K562 (cell line): ENCODE measurements at regions of chr5 and their contacts with region 1.

Region 1: DNA sequence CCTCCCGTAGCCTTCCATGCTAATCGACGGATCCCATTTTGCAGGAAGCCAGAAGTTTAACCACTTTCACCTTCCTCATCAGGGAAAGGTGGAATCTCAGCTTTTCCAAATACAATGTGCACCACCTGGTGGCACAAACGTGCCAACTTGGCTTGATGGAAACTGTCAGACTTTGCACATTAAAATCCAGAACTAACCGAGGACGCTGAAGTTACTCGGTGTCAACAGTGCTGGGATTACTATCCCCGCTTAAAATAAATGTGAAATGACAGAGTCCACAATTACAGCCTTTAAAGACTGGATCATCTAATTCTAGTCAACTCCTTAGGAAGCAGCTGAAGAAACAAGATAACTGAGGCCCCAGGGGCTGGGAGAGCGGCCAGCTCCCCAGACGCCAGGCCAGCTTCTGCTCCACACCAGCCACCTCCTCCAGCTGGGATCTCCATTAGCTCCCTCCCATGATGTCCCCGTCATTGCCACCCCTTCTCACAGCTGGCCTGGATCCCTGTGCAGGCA is 50.1 kb upstream of the RETREG1 start:
- DNase-seq: no peak
- ATAC-seq: no peak; the same call in 2 of the 3 replicates
- H3K4me3 ChIP-seq: no peak overlapping the region
- H3K27ac ChIP-seq: no peak overlapping the region
- H3K4me1 ChIP-seq: no peaks in the 10 kb centered on the region
- H3K27me3 ChIP-seq: peaks cover 6 to 32% of the 10 kb centered on the region in 2 experiments; a peak in 4 of 5 replicates
- CTCF ChIP-seq: peak in 1 of 3 experiments; percentile 34; a peak in 1 of 6 replicates
- EP300 ChIP-seq: no peak
- POLR2A ChIP-seq: no peak
- RAD21 ChIP-seq: peak; percentile 24 to 57; a peak in 3 of 4 replicates

Region 2: DNA sequence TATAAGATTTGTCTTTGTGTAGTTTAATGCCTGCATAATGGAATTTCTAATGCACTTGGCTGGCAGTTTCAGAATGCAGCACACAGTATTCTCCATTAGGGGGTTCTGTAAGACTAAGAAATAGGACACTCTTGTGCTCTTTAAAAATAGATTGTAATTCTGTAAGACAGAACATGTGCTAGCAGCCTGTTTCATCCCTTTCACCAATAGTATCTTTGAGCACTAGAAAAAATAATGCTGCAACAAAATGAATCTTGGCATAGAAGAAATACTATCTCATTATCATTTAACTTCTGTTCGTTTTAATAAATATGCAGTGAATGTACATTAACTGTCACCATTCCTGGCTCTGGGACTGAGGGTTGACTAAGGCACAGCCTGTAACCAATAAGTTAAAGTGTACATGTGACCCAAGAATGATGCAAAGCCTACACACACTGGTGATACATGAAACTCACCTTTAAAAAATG is 177.6 kb before region 1 on chr5:
- CTCF ChIA-PET with region 1: no interaction called
- POLR2A ChIA-PET with region 1: no interaction called
- in situ Hi-C with region 1: no loop called
- intact Hi-C with region 1: loop called (anchors 10 kb)
- DNase-seq: peak in 2 of 4 experiments; percentile 28 to 42
- ATAC-seq: peak; percentile 92
- H3K4me3 ChIP-seq: no peak overlapping the region
- H3K27ac ChIP-seq: no peak overlapping the region
- H3K4me1 ChIP-seq: no peaks in the 10 kb centered on the region
- H3K27me3 ChIP-seq: peaks cover 10 to 18% of the 10 kb centered on the region in 2 experiments; a peak in 4 of 5 replicates
- CTCF ChIP-seq: peak; percentile 48 to 73 (median 49); a peak in 4 of 6 replicates
- EP300 ChIP-seq: no peak
- POLR2A ChIP-seq: no peak
- RAD21 ChIP-seq: peak; percentile 93 to 95